Left ventricle myocardium superior (tissue), 1 donor: ENCODE measurements at regions of chr15 and their contacts with region 1.

Region 1: GRCh38 chr15:70264014-70264582 is 166.4 kb upstream of the TLE3 start:
- DNase-seq: peak; percentile 46
- ATAC-seq: peak; percentile 69

Region 2: DNA sequence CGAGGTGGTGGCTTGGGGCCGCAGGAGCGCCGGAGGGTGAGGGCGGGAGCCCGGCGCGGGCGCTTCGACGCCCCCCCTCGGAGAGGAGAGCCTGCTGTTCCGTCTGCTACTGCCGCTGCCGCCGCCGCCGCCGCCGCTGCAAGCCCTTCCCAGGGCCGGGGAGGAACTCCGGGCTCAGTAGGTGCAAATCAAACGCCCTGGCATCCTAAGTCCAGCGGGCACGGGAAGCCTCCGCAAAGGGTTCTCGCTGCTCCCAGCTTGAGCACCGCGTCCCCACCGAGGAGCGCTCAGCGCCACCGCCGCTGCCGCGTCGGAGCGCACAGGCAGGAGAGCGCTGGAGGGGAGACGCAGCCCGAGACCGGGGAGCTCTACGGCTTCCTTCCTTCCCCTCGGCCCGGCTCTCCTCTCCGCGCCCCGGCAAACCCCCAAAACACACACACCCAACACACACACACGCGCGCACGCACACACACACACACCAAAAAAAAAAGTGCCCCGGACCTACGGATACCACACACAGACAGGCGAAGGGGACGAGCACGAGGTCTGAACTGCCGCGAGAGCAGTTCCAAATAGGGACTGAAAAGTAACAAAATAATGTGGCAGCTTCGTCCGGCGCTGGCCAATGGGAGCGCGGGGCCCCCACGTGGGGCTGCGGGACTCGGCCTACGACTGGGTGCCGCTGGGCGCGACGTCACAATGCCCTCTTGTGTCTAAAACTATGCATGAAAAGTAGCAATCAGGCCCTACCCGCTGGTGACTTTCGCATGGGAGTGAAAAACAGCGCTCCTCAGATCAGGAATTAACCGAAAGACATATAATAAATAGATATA is 166.5 kb before region 1 on chr15 and contains the start of gene TLE3:
- intact Hi-C with region 1: loop called (anchors 10 kb)
- DNase-seq: peak; percentile 100
- ATAC-seq: peak; percentile 68
- total RNA-seq, gene TLE3: 12.8 TPM